Psoas muscle (tissue), 8 donors: ENCODE measurements at regions of chr17 and their contacts with region 1.

Region 1: GRCh38 chr17:69246726-69247375 is 18.2 kb upstream of the ABCA10 start:
- DNase-seq: no peak
- ATAC-seq: peak in 2 of 4 donors; percentile 60 to 72
- H3K4me3 ChIP-seq: no peak overlapping the region
- H3K27ac ChIP-seq: no peak overlapping the region
- H3K4me1 ChIP-seq: no peaks in the 10 kb centered on the region
- H3K27me3 ChIP-seq: no peaks in the 10 kb centered on the region
- CTCF ChIP-seq: peak; percentile 62

Region 2: DNA sequence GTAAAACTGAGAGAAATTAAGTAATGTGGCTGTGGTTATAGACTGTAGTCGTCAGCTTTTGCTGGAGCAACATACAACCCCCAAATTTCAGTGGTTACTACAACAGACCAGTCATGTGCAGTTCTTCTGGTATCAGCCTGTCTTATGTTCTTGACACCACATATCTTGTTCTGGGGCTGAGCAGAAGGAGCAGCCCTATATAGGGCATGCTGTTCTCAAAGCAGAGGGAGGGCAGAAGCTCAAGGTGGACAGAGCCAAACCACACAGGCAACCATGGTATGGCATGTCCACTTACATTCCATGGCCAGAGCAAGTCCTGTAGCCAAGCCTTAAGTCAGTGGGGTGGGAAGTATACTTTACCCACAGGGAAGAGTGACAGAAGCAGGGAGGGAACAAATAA is 726.9 kb before region 1 on chr17:
- intact Hi-C with region 1: loop called in 1 of 2 experiments (anchors 10 kb)
- DNase-seq: peak; percentile 23 to 64
- ATAC-seq: peak; percentile 81 to 94 (median 89)
- H3K4me3 ChIP-seq: peak overlapping the region; percentile 90
- H3K27ac ChIP-seq: peak overlapping the region; percentile 98
- H3K4me1 ChIP-seq: peaks cover 69% of the 10 kb centered on the region
- H3K27me3 ChIP-seq: no peaks in the 10 kb centered on the region
- CTCF ChIP-seq: no peak

Region 3: DNA sequence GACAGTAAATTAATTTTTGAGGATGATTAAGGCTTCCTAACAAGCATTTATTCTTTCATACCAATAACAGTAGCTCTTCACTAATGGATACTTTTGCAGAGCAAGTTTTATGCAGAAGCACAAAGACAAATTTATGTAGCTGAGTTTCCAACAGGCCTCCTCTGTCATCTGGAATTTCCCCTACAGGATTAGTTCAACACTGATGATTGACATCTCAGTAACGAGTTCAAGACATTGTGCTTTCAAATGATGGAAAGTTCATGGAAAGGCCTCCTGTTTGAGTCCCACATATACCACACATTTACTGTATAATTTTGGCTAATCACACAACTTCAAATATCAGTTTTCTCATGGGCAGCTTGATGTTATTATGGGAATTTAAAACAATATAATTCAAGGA is 58.8 kb before region 1 on chr17:
- intact Hi-C with region 1: no loop called
- DNase-seq: no peak
- ATAC-seq: no peak
- H3K4me3 ChIP-seq: no peak overlapping the region
- H3K27ac ChIP-seq: no peak overlapping the region
- H3K4me1 ChIP-seq: no peaks in the 10 kb centered on the region
- H3K27me3 ChIP-seq: no peaks in the 10 kb centered on the region
- CTCF ChIP-seq: no peak

Region 4: DNA sequence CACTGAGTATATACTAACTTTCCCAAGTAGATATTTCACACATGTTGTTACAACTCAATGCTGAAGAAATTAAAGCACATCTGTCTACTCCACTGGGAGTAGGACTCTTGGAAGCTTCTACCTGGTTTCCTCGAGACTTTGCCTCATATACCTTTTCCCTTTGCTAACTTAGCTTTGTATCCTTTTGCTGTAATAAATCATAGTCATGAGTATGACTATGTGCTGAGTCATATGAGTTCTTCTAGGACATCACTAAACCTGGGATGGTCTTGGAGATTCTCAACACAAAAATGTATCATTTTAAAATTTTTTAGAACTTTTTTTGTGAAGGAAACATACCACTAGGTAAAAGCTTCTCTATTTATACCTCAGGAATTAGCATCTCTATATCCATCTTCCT is 40.3 kb after region 1 on chr17:
- intact Hi-C with region 1: loop called (anchors 5 kb)
- DNase-seq: no peak
- ATAC-seq: peak in 1 of 4 donors; percentile 59
- H3K4me3 ChIP-seq: no peak overlapping the region
- H3K27ac ChIP-seq: no peak overlapping the region
- H3K4me1 ChIP-seq: no peaks in the 10 kb centered on the region
- H3K27me3 ChIP-seq: no peaks in the 10 kb centered on the region
- CTCF ChIP-seq: no peak